Naive thymus-derived CD8-positive, alpha-beta T cell (primary cell): ENCODE measurements at regions of chr16 and their contacts with region 1.

Region 1: GRCh38 chr16:27235055-27235937 is 32.0 kb downstream of the KDM8 start:
- DNase-seq: peak; percentile 73 to 97 (median 94)
- ATAC-seq: peak; percentile 60 to 77
- H3K4me3 Mint-ChIP-seq: peak overlapping the region; percentile 66 to 91 (median 84)
- H3K27ac Mint-ChIP-seq: peak overlapping the region; percentile 98 to 100 (median 98)
- H3K4me1 Mint-ChIP-seq: peaks cover 57 to 99% (median 96%) of the 10 kb centered on the region in 4 donors
- H3K27me3 Mint-ChIP-seq: no peaks in the 10 kb centered on the region

Region 2: GRCh38 chr16:27161398-27161797 is 73.9 kb before region 1 on chr16:
- POLR2A ChIA-PET with region 1: no interaction called
- DNase-seq: no peak
- ATAC-seq: no peak
- H3K4me3 Mint-ChIP-seq: no peak overlapping the region
- H3K27ac Mint-ChIP-seq: no peak overlapping the region
- H3K4me1 Mint-ChIP-seq: peaks cover 0 to 5% (median 2%) of the 10 kb centered on the region in 4 donors
- H3K27me3 Mint-ChIP-seq: no peaks in the 10 kb centered on the region

Region 3: GRCh38 chr16:27179500-27180072 is 55.7 kb before region 1 on chr16:
- POLR2A ChIA-PET with region 1: interaction called, 51 read pairs
- DNase-seq: peak; percentile 76 to 93 (median 86)
- ATAC-seq: peak; percentile 98 to 99
- H3K4me3 Mint-ChIP-seq: peak overlapping the region in 6 of 10 donors; percentile 0 to 30 (median 3)
- H3K27ac Mint-ChIP-seq: peak overlapping the region; percentile 53 to 92 (median 83)
- H3K4me1 Mint-ChIP-seq: peaks cover 23 to 40% (median 36%) of the 10 kb centered on the region in 4 donors
- H3K27me3 Mint-ChIP-seq: no peaks in the 10 kb centered on the region

Region 4: DNA sequence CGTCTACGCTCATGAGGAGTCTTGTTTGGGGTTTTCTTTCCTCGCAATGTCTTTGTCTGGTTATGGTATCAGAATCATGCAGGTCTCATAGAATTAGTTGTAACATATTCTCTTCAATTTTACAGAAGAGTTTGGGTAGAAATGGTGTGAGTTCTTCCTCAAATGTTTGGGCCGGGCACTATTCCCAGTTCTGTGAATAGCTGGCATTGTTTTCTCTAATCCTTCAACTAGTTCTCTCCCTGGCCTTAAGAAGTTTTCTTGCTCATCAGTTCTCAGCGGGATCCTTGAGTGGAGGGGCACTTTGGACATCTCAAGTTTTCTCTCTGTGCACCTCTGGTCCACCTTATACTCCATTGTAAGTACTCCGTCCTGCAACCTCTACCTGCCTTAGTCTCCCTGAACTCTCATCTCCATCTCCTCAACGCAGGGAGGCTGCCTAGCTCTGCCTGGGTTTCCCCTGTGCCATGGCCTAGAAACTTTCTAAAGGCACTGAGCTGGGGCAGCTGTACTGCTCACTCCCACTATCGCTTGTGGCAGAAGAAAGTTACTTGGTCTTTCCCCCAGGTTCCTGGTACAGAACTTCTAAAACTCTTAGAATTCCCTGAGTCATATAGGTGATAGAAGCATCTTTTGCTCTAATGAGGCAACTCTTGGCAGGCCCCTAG is 16.4 kb after region 1 on chr16:
- POLR2A ChIA-PET with region 1: interaction called, 13 read pairs
- DNase-seq: no peak
- ATAC-seq: no peak
- H3K4me3 Mint-ChIP-seq: peak overlapping the region in 4 of 10 donors; percentile 30 to 59 (median 46)
- H3K27ac Mint-ChIP-seq: peak overlapping the region in 6 of 10 donors; percentile 34 to 85 (median 65)
- H3K4me1 Mint-ChIP-seq: peaks cover 18 to 61% (median 59%) of the 10 kb centered on the region in 4 donors
- H3K27me3 Mint-ChIP-seq: no peaks in the 10 kb centered on the region

Region 5: GRCh38 chr16:27291722-27292240 is 56.5 kb after region 1 on chr16:
- POLR2A ChIA-PET with region 1: no interaction called
- DNase-seq: no peak
- ATAC-seq: no peak
- H3K4me3 Mint-ChIP-seq: no peak overlapping the region
- H3K27ac Mint-ChIP-seq: peak overlapping the region in 3 of 10 donors; percentile 17 to 47 (median 19)
- H3K4me1 Mint-ChIP-seq: peaks cover 12 to 40% (median 16%) of the 10 kb centered on the region in 4 donors
- H3K27me3 Mint-ChIP-seq: no peaks in the 10 kb centered on the region

Region 6: GRCh38 chr16:27314161-27314723 is 78.9 kb after region 1 on chr16:
- POLR2A ChIA-PET with region 1: interaction called, 58 read pairs
- DNase-seq: peak in 8 of 10 donors; percentile 18 to 66 (median 38)
- ATAC-seq: peak; percentile 19 to 20
- H3K4me3 Mint-ChIP-seq: peak overlapping the region; percentile 83 to 94 (median 91)
- H3K27ac Mint-ChIP-seq: peak overlapping the region; percentile 91 to 97 (median 96)
- H3K4me1 Mint-ChIP-seq: peaks cover 41 to 59% (median 55%) of the 10 kb centered on the region in 4 donors
- H3K27me3 Mint-ChIP-seq: no peaks in the 10 kb centered on the region

Region 7: DNA sequence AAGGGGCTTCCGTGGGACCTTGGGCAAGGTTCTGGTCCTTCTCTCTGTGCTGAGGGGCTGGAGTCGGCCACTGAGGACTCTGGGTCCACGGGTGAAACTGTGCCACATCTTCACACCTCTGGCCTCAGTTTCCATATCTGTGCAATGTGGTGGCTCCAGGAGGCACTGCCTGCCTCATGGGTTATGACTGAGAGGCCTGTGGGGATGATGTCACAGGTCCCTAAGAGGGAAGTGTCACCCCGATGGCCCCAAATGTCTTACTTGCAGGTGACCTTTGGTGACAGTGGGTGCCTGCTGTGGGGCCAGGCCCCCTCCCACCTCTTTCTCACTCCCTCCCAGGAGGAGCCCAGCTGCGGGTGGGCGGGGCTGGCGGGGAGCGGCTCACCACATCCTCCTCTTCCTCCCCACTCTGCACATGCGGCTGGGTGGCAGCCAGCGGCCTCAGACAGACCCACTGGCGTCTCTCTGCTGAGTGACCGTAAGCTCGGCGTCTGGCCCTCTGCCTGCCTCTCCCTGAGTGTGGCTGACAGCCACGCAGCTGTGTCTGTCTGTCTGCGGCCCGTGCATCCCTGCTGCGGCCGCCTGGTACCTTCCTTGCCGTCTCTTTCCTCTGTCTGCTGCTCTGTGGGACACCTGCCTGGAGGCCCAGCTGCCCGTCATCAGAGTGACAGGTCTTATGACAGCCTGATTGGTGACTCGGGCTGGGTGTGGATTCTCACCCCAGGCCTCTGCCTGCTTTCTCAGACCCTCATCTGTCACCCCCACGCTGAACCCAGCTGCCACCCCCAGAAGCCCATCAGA is 166.7 kb after region 1 on chr16 and contains the start of gene IL21R:
- POLR2A ChIA-PET with region 1: interaction called, 35 read pairs
- DNase-seq: peak; percentile 71 to 94 (median 82)
- ATAC-seq: peak; percentile 80 to 81
- H3K4me3 Mint-ChIP-seq: peak within 1 kb of the TSS; percentile 97 to 99 (median 98)
- H3K27ac Mint-ChIP-seq: peak within 1 kb of the TSS; percentile 92 to 100 (median 99)
- H3K4me1 Mint-ChIP-seq: peaks cover 29 to 87% (median 73%) of the 10 kb centered on the region in 4 donors
- H3K27me3 Mint-ChIP-seq: no peaks in the 10 kb centered on the region
- polyA plus RNA-seq, gene IL21R: 26.5 to 47.1 (median 33.9) TPM